ENCODE measurements at regions of chr5 and their contacts with region 1.

Region 1: DNA sequence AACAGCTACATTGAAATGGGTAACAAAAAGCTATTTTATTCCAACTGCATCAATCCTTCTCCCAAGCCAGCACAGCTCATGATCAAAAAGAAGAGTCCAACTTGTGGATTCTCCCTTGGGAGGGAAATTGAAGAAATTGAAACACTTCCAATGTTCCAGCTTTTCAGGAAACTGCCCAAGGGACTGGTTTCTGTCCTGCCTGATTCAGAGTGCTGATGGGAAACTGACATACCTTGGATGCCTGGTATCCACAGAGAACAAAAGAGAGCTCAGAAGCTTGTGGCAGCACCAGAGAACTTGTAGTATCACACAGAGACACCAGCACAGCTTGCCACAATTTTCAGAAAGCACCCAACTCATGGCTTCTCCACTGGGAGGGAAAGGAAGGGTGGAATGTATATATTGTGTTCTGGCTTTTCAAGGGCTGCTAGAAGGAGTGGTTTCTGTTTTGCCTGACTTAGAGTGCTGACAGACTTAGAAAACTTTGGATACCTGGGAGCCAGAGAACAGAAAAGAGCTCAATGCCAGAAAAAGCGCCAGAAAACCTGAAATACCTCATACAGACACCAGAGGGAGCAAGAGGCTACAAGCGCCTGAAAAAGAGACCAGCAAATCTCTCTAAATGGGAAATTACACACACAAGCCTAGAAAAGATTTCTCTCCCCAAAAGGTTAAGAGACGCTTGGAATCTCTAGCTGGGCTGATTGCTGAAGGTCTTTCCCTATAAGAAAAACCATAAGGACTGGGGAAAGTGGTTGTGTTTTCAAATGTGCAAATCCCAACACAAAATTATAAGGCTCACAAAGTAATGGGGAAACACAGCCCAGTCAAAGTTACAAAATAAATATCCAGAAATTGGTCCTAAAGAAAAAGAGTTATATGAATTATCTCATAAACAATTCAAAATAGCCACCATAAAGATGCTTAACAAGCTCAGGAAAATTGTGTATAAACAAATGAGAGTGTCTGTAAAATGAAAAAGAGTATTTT is 178.8 kb downstream of the SPOCK1 start:
- DNase-seq: peak; percentile 78
- H3K4me3 Mint-ChIP-seq: no peak overlapping the region
- H3K27ac Mint-ChIP-seq: peak overlapping the region; percentile 32
- H3K4me1 Mint-ChIP-seq: peaks cover 11% of the 10 kb centered on the region
- H3K27me3 Mint-ChIP-seq: no peaks in the 10 kb centered on the region
- CTCF ChIP-seq: peak; percentile 93

Region 2: DNA sequence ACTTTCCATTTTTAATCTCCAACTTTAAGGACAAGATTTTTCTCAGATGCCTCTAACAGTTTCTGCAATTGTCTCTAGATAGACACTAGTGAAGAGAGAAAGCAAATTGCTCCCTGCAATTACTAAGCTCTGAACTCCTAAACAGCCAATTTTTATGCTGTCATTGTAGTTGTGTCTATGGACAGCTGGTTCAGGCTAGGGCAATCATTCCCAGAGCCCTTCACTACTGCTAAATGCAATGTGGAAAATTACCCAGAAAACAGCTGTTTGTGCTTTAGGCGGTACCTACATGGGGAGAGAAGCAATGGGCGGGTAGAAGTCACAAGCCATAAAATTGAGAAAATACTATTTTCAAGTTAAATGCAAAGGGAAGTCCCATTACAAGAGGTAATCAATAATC is 32.8 kb before region 1 on chr5:
- CTCF ChIA-PET with region 1: interaction called, 24 read pairs
- POLR2A ChIA-PET with region 1: interaction called, 3 read pairs
- intact Hi-C with region 1: no loop called
- DNase-seq: no peak
- H3K4me3 Mint-ChIP-seq: no peak overlapping the region
- H3K27ac Mint-ChIP-seq: no peak overlapping the region
- H3K4me1 Mint-ChIP-seq: no peaks in the 10 kb centered on the region
- H3K27me3 Mint-ChIP-seq: no peaks in the 10 kb centered on the region
- CTCF ChIP-seq: no peak

Region 3: GRCh38 chr5:137356127-137356526 is 35.8 kb after region 1 on chr5:
- CTCF ChIA-PET with region 1: interaction called, 10 read pairs
- POLR2A ChIA-PET with region 1: no interaction called
- intact Hi-C with region 1: no loop called
- DNase-seq: no peak
- H3K4me3 Mint-ChIP-seq: no peak overlapping the region
- H3K27ac Mint-ChIP-seq: no peak overlapping the region
- H3K4me1 Mint-ChIP-seq: no peaks in the 10 kb centered on the region
- H3K27me3 Mint-ChIP-seq: no peaks in the 10 kb centered on the region
- CTCF ChIP-seq: no peak

Region 4: DNA sequence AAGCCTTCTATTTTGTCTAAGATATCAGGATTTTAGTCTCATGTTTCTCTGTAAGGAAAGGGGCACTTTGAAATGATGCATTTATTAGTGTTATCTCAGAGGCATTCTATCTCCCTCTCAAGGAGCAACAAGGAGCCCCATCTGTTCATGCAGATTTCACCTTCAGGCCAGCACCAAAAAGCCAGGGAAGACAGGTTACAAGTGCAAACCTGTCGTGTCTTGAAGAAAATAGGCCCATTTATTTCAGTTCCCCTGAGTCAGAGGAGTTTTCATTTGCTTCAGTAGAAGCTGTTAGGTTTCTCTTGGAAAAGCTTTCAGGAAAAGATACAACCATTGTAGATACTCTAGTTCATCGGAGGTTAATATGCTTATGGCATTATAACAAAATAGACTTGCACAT is 81.6 kb after region 1 on chr5:
- CTCF ChIA-PET with region 1: interaction called, 11 read pairs
- POLR2A ChIA-PET with region 1: interaction called, 4 read pairs
- intact Hi-C with region 1: no loop called
- DNase-seq: no peak
- H3K4me3 Mint-ChIP-seq: no peak overlapping the region
- H3K27ac Mint-ChIP-seq: no peak overlapping the region
- H3K4me1 Mint-ChIP-seq: peaks cover 7% of the 10 kb centered on the region
- H3K27me3 Mint-ChIP-seq: no peaks in the 10 kb centered on the region
- CTCF ChIP-seq: no peak

Region 5: GRCh38 chr5:137498736-137499505 is 178.6 kb after region 1 on chr5 and contains the start of gene SPOCK1:
- CTCF ChIA-PET with region 1: interaction called, 238 read pairs
- POLR2A ChIA-PET with region 1: interaction called, 4 read pairs
- intact Hi-C with region 1: loop called (anchors 1 kb)
- DNase-seq: peak; percentile 80
- H3K4me3 Mint-ChIP-seq: peak within 1 kb of the TSS; percentile 19
- H3K27ac Mint-ChIP-seq: no peak within 1 kb of the TSS
- H3K4me1 Mint-ChIP-seq: peaks cover 5% of the 10 kb centered on the region
- H3K27me3 Mint-ChIP-seq: no peaks in the 10 kb centered on the region
- CTCF ChIP-seq: peak; percentile 95
- total RNA-seq, gene SPOCK1: 34.3 and 61.6 TPM in 2 replicates

Region 6: DNA sequence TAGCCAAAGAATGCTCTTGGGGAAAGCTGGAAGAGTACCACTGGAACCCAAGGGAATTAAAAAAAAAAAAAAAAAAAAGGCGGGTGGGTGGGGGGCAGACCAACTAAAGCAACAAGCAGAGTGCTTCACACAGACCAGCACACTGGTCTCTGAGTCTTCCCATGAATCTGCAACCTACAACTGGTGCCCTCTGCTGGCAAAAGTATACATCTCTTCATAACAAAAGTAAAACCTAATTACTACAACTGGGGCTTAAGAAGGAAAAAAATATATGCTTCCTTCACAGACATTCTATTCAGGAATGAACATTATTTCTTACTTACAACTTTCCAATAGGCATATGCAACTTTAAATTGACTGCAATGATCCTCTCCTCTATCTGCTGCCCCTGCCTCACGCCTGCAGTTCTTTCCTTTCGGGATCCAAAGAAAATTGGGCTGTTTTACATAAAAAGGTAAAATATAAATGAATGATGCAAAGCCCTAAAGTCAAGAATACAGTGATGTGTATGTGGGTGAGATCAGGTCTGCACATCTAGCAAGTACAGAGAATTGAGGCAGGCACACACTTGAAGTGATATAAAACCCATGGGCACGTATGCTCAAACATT is 422.8 kb after region 1 on chr5:
- CTCF ChIA-PET with region 1: interaction called, 35 read pairs
- POLR2A ChIA-PET with region 1: no interaction called
- intact Hi-C with region 1: loop called (anchors 2 kb)
- DNase-seq: peak; percentile 91
- H3K4me3 Mint-ChIP-seq: no peak overlapping the region
- H3K27ac Mint-ChIP-seq: no peak overlapping the region
- H3K4me1 Mint-ChIP-seq: no peaks in the 10 kb centered on the region
- H3K27me3 Mint-ChIP-seq: no peaks in the 10 kb centered on the region
- CTCF ChIP-seq: peak; percentile 62

Measured in MCF 10A (cell line).